OCI-LY7 (cell line): ENCODE measurements at regions of chr10 and their contacts with region 1.

Region 1: DNA sequence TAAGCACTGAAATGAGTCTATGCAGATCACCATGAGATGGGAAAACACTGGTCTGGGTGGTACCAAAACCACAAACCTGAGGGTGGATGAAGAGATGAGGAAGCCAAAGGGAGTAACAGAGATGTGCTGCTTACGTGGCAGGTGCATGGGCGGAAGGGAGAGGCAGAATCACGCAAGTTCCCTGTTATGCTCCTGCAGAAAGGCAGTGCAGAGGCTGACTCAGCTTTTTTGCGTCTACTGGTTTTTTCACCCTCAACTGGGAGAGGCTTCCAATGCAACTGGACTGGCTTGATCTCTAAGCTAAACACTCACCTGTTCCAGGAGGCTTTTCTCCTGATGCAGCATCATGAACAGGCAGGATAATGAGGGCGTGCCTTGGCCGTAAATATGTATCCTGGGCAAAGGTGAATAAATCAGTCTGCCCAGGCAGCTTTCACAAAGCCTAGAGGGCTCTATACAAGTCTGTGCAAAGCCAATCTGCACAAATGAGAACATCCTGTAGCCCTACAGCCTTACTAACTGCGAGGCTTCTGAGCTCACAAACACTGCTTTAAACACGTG is 95.4 kb upstream of the AFAP1L2 start:
- DNase-seq: peak; percentile 75
- H3K4me3 ChIP-seq: peak overlapping the region; percentile 49
- H3K27ac ChIP-seq: peak overlapping the region; percentile 97
- H3K4me1 ChIP-seq: peaks cover 92% of the 10 kb centered on the region
- CTCF ChIP-seq: no peak

Region 2: GRCh38 chr10:114401195-114401791 is 98.4 kb before region 1 on chr10:
- CTCF ChIA-PET with region 1: no interaction called
- POLR2A ChIA-PET with region 1: no interaction called
- intact Hi-C with region 1: no loop called
- DNase-seq: no peak
- H3K4me3 ChIP-seq: no peak overlapping the region
- H3K27ac ChIP-seq: no peak overlapping the region
- H3K4me1 ChIP-seq: no peaks in the 10 kb centered on the region
- CTCF ChIP-seq: no peak

Region 3: DNA sequence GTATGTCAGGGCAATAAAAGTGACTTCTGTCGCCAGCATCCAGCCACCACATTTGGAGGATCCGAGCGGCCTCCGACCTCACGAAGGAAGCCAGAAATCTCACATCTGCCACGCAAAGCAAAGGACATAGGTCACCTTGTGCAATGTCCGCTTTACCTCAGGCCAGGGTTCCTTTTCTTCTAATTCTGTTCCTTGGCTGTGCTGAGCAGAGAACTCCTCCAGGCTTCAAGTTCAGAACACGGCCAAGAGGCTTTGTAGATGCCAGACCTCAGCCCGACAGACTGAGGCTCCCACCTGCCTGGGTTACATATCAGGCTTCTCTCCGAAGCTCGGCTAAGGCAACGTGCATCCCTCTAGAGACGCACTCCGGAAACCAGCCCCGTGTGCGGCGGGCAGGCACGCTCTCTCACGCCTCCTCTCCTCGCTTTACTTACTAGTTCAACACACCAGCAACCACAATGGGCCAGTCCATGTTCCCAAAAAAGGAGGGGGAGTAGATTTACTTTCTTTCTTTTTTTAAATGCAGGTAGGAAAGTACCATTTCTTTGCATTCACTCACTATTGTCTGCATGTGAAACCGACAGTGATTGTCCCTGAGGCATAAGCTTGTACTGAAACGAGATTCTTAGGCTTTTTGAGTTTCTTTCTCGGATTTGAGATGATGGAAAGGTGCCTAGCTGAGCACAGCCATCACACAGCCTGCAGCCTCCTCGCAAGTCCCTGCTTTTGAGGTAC is 27.0 kb after region 1 on chr10:
- CTCF ChIA-PET with region 1: interaction called, 14 read pairs
- POLR2A ChIA-PET with region 1: interaction called, 464 read pairs
- intact Hi-C with region 1: loop called (anchors 1 kb)
- DNase-seq: peak; percentile 98
- H3K4me3 ChIP-seq: peak overlapping the region; percentile 89
- H3K27ac ChIP-seq: peak overlapping the region; percentile 91
- H3K4me1 ChIP-seq: peaks cover 35% of the 10 kb centered on the region
- CTCF ChIP-seq: no peak